Activated T-helper 2 cell treated with anti-CD3 and anti-CD28 coated beads, Interferon-gamma antibody, Interleukin-2, Interleukin-4, amounts not matched to agents 10 μg/mL and 5 μg/mL and 100 μg/mL, durations not matched to agents 14 hours and 24 hours and 36 hours (primary cell): ENCODE measurements at regions of chr10 and their contacts with region 1.

Region 1: GRCh38 chr10:8416192-8416701 is 361.8 kb downstream of the GATA3 start:
- DNase-seq: peak; percentile 65
- H3K4me3 Mint-ChIP-seq: no peak overlapping the region
- H3K27ac Mint-ChIP-seq: peak overlapping the region; percentile 95
- H3K4me1 Mint-ChIP-seq: peaks cover 57% of the 10 kb centered on the region
- H3K27me3 Mint-ChIP-seq: no peaks in the 10 kb centered on the region

Region 2: GRCh38 chr10:7813481-7813880 is 602.8 kb before region 1 on chr10:
- intact Hi-C with region 1: no loop called
- DNase-seq: no peak
- H3K4me3 Mint-ChIP-seq: no peak overlapping the region
- H3K27ac Mint-ChIP-seq: no peak overlapping the region
- H3K4me1 Mint-ChIP-seq: peaks cover 6% of the 10 kb centered on the region
- H3K27me3 Mint-ChIP-seq: peaks cover 8% of the 10 kb centered on the region

Region 3: GRCh38 chr10:8059959-8060703 is 356.1 kb before region 1 on chr10:
- intact Hi-C with region 1: loop called (anchors 2 kb)
- DNase-seq: peak; percentile 81
- H3K4me3 Mint-ChIP-seq: peak overlapping the region; percentile 92
- H3K27ac Mint-ChIP-seq: peak overlapping the region; percentile 94
- H3K4me1 Mint-ChIP-seq: peaks cover 50% of the 10 kb centered on the region
- H3K27me3 Mint-ChIP-seq: no peaks in the 10 kb centered on the region

Region 4: DNA sequence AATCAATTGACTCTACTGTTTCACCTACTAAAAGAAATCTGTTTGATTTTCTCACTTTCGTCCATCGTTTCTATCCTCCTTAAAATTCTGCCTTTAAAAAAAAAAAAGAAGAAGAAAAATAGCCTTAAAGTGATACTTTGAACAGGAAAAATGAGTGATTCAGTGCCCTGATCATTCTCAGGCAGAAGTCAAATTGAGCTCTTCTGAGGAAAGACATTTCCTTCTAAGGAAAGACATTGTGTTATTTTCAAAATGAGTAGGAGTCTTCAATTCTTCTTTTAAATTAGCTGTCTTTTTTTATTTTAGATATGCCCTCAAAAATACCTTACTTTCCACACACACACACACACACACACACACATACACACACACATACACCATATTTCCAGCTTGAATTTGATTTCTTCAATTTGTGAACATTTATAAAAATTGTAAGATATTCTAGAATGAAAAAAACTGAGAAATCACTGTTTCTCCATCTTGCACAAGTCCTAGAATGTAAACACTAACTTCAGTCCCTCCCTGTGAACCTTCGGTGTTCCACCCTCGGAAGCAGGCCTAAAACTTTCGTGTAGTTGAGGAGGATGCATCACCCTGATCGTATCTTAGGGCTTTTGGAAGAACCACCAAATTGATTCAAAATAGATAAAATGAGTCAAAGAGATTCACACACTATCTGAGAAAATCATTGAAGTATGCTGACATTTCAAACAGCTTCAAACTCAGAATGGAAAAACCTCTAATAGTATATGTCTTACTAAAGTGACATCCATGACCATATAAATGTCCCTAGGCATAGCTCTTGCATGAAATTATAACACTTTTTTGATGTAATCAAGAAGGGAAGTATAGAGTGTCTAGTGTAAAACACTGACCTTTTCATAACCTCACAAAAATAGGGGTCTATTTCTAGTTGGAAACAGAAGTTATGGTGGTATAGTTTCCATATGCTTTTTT is 90.9 kb before region 1 on chr10:
- intact Hi-C with region 1: loop called (anchors 1 kb)
- DNase-seq: peak; percentile 42
- H3K4me3 Mint-ChIP-seq: peak overlapping the region; percentile 40
- H3K27ac Mint-ChIP-seq: peak overlapping the region; percentile 93
- H3K4me1 Mint-ChIP-seq: peaks cover 78% of the 10 kb centered on the region
- H3K27me3 Mint-ChIP-seq: no peaks in the 10 kb centered on the region

Region 5: GRCh38 chr10:8378198-8378983 is 37.9 kb before region 1 on chr10:
- intact Hi-C with region 1: no loop called
- DNase-seq: no peak
- H3K4me3 Mint-ChIP-seq: no peak overlapping the region
- H3K27ac Mint-ChIP-seq: peak overlapping the region; percentile 53
- H3K4me1 Mint-ChIP-seq: peaks cover 43% of the 10 kb centered on the region
- H3K27me3 Mint-ChIP-seq: no peaks in the 10 kb centered on the region

Region 6: DNA sequence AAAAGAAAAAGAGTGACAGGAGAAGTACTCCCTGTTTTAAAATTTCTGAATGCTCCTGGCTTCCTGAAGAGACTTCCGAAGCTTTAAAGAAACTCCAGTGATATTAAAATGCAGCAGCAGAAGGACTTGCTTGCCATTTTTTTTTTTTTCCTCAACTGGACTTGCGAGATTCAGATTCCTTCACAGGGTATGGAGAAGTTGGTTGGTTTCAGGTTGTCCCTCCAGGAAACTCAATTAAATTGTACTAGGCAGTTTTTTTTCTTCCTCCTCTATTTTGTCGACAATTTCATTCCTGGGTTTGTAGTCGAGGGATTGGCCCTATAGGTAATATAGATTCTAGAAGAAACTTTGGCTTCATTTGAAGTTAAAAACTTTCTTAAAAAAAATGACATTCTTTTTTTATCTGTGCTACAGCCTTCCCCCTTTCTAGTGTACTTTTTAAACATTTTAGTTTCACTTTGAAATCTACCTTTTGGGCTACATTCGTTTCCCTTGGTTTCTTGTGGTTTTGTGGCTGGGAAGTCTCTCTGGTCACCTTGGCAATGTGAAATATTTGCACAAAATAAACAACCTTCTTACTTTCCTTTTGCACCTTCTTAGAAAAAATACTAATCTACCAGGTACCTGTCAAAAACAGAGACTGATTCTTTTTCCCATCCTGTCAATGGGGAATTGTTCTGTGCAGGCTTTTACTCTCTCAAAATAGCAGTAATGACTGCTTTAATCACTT is 11.7 kb before region 1 on chr10:
- intact Hi-C with region 1: loop called (anchors 1 kb)
- DNase-seq: peak; percentile 63
- H3K4me3 Mint-ChIP-seq: peak overlapping the region; percentile 75
- H3K27ac Mint-ChIP-seq: peak overlapping the region; percentile 98
- H3K4me1 Mint-ChIP-seq: peaks cover 80% of the 10 kb centered on the region
- H3K27me3 Mint-ChIP-seq: no peaks in the 10 kb centered on the region

Region 7: GRCh38 chr10:9024210-9024609 is 608.0 kb after region 1 on chr10:
- intact Hi-C with region 1: loop called (anchors 2 kb)
- DNase-seq: no peak
- H3K4me3 Mint-ChIP-seq: no peak overlapping the region
- H3K27ac Mint-ChIP-seq: peak overlapping the region; percentile 88
- H3K4me1 Mint-ChIP-seq: peaks cover 74% of the 10 kb centered on the region
- H3K27me3 Mint-ChIP-seq: no peaks in the 10 kb centered on the region

Region 8: GRCh38 chr10:9294865-9295264 is 878.6 kb after region 1 on chr10:
- intact Hi-C with region 1: loop called (anchors 2 kb)
- DNase-seq: no peak
- H3K4me3 Mint-ChIP-seq: no peak overlapping the region
- H3K27ac Mint-ChIP-seq: peak overlapping the region; percentile 71
- H3K4me1 Mint-ChIP-seq: peaks cover 27% of the 10 kb centered on the region
- H3K27me3 Mint-ChIP-seq: peaks cover 2% of the 10 kb centered on the region